Motor neuron (in vitro differentiated cells): ENCODE measurements at regions of chr4 and their contacts with region 1.

Region 1: GRCh38 chr4:164731827-164732474 is 22.0 kb upstream of the SMIM31 start:
- ATAC-seq: peak in 7 of 8 experiments; percentile 33 to 65 (median 53)
- H3K4me3 ChIP-seq: no peak overlapping the region
- H3K27ac ChIP-seq: no peak overlapping the region
- H3K4me1 ChIP-seq: no peaks in the 10 kb centered on the region

Region 2: GRCh38 chr4:163494360-163495162 is 1237.4 kb before region 1 on chr4 and contains the start of gene TMA16:
- in situ Hi-C with region 1: loop called in 2 of 9 experiments (anchors 25 kb)
- ATAC-seq: peak; percentile 89 to 93 (median 91)
- H3K4me3 ChIP-seq: peak within 1 kb of the TSS; percentile 51 to 93 (median 76)
- H3K27ac ChIP-seq: peak within 1 kb of the TSS; percentile 84 to 91
- H3K4me1 ChIP-seq: peaks cover 3 to 11% of the 10 kb centered on the region in 2 donors
- total RNA-seq, gene TMA16: 15.8 to 65.2 (median 31.1) TPM

Region 3: GRCh38 chr4:163544407-163545038 is 1187.4 kb before region 1 on chr4:
- in situ Hi-C with region 1: loop called in 1 of 9 experiments (anchors 25 kb)
- ATAC-seq: peak; percentile 37 to 85 (median 69)
- H3K4me3 ChIP-seq: no peak overlapping the region
- H3K27ac ChIP-seq: no peak overlapping the region
- H3K4me1 ChIP-seq: no peaks in the 10 kb centered on the region

Region 4: GRCh38 chr4:163554870-163555465 is 1177.0 kb before region 1 on chr4:
- in situ Hi-C with region 1: loop called in 4 of 9 experiments (anchors 10 to 25 kb)
- ATAC-seq: no peak
- H3K4me3 ChIP-seq: no peak overlapping the region
- H3K27ac ChIP-seq: no peak overlapping the region
- H3K4me1 ChIP-seq: no peaks in the 10 kb centered on the region

Region 5: GRCh38 chr4:163681208-163681821 is 1050.6 kb before region 1 on chr4:
- in situ Hi-C with region 1: loop called in 1 of 9 experiments (anchors 25 kb)
- ATAC-seq: peak in 3 of 8 experiments; percentile 68 to 83 (median 81)
- H3K4me3 ChIP-seq: no peak overlapping the region
- H3K27ac ChIP-seq: no peak overlapping the region
- H3K4me1 ChIP-seq: no peaks in the 10 kb centered on the region

Region 6: DNA sequence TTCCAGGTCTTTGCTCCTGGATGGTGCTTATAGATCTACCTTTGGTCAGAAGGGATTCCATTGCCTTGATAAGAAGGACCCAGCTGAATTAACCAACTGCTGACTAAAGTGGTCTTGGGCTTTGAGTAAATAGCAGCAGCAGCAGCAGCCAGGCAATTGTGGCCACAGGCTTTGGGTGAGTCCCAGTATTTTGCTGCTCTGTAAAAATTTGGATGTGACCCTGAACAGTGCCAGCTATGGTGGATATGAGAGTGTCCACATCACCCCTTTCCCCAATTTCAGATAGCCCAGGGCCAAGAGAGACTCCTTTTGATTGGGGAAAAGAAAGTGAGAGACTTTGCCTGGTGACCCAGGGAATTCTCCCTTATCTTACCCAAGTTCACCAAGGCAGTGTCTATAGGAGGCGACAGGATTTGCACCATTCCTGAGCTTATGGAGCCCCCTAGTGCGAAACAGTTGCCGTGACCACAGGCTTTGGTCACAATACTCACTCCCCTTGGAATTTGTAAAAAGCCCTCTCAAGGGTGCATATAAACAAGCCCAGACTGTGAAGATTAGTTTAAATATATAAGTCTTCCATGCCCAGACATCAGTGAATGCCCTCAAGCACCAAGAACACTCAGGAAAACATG is 719.4 kb before region 1 on chr4:
- in situ Hi-C with region 1: loop called in 2 of 9 experiments (anchors 25 kb)
- ATAC-seq: peak in 5 of 8 experiments; percentile 44 to 100 (median 76)
- H3K4me3 ChIP-seq: no peak overlapping the region
- H3K27ac ChIP-seq: no peak overlapping the region
- H3K4me1 ChIP-seq: no peaks in the 10 kb centered on the region

Region 7: GRCh38 chr4:164304101-164304639 is 427.8 kb before region 1 on chr4:
- in situ Hi-C with region 1: no loop called
- ATAC-seq: no peak
- H3K4me3 ChIP-seq: no peak overlapping the region
- H3K27ac ChIP-seq: no peak overlapping the region
- H3K4me1 ChIP-seq: no peaks in the 10 kb centered on the region